ENCODE measurements at regions of chr9 and their contacts with region 1.

Region 1: DNA sequence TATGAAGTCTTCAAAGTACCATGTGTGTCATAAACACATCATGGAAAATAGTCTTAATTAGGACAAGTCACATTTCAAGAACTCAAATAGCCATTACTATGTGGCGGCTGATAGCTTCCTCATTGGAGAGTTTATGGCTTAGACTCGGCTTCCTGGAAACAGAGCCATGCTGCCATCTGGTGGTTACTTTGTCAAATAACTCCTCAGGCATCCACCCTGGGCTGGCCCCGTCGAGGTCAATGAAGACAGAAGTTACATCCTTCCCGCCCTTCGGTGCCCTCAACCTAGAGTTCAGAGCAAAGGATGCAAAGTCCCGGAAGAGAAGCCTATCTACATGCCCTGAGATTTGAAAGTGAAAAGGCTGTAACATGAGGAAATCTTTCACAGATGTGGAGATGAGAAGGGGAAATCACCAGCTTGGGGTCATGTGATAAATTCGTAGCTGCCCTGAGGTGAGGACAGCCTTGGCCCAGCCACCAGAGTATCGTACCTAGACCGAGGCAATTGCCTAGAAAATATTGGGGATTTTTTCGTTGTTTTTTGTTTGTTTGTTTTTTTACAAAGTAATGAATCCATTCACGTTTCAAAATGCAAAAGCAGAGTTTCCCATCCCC is 45.5 kb upstream of the ZNF169 start:
- DNase-seq: peak; percentile 52 to 90 (median 63)
- ATAC-seq: peak; percentile 85
- H3K4me3 ChIP-seq: no peak overlapping the region
- H3K4me3 Mint-ChIP-seq: no peak overlapping the region
- H3K27ac ChIP-seq: no peak overlapping the region
- H3K27ac Mint-ChIP-seq: no peak overlapping the region
- H3K4me1 ChIP-seq: peaks cover 5% of the 10 kb centered on the region
- H3K4me1 Mint-ChIP-seq: peaks cover 4% of the 10 kb centered on the region
- H3K27me3 ChIP-seq: peaks cover 3 to 15% of the 10 kb centered on the region in 2 experiments
- H3K27me3 Mint-ChIP-seq: peaks cover 35% of the 10 kb centered on the region
- CTCF ChIP-seq: peak; percentile 88

Region 2: GRCh38 chr9:93682232-93682968 is 531.2 kb before region 1 on chr9:
- CTCF ChIA-PET with region 1: no interaction called
- POLR2A ChIA-PET with region 1: no interaction called
- intact Hi-C with region 1: loop called (anchors 1 to 5 kb)
- DNase-seq: peak; percentile 32 to 72 (median 53)
- ATAC-seq: peak; percentile 68
- H3K4me3 ChIP-seq: no peak overlapping the region
- H3K4me3 Mint-ChIP-seq: no peak overlapping the region
- H3K27ac ChIP-seq: no peak overlapping the region
- H3K27ac Mint-ChIP-seq: no peak overlapping the region
- H3K4me1 ChIP-seq: peaks cover 6% of the 10 kb centered on the region
- H3K4me1 Mint-ChIP-seq: no peaks in the 10 kb centered on the region
- H3K27me3 ChIP-seq: peaks cover 0 to 2% of the 10 kb centered on the region in 2 experiments
- H3K27me3 Mint-ChIP-seq: peaks cover 7% of the 10 kb centered on the region
- CTCF ChIP-seq: peak; percentile 69

Region 3: DNA sequence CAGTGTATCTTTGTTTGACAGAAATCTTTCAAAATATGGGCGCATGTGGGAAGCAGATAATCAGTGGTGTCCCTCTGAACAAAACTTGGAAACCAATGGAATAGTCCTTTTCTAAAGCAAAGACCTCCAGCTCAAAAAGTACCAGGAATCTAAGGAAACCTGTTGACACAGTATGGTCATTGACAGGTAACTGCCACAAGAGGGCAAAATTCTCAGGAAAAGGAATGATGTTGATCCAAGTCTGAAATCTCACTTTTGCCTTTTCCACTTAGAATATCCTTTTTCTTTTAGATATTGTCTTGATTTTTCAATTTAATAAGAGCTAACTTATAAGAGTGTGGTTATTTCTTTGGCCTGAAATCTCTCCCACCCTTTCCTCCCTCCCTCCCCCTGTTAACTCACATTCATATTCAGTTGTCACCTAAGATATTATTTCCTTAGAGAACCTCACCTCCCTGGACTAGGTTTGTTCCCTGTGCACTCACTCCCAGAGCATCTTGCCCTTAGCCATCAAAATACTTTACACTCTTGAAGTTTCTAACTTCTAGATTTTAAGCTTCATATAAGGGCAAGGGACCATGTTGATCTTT is 199.5 kb before region 1 on chr9:
- CTCF ChIA-PET with region 1: interaction called, 4 read pairs
- POLR2A ChIA-PET with region 1: no interaction called
- intact Hi-C with region 1: loop called (anchors 2 to 5 kb)
- DNase-seq: peak in 3 of 14 experiments; percentile 18 to 33 (median 28)
- ATAC-seq: no peak
- H3K4me3 ChIP-seq: no peak overlapping the region
- H3K4me3 Mint-ChIP-seq: no peak overlapping the region
- H3K27ac ChIP-seq: no peak overlapping the region
- H3K27ac Mint-ChIP-seq: no peak overlapping the region
- H3K4me1 ChIP-seq: peaks cover 11% of the 10 kb centered on the region
- H3K4me1 Mint-ChIP-seq: peaks cover 26% of the 10 kb centered on the region
- H3K27me3 ChIP-seq: no peaks in the 10 kb centered on the region
- H3K27me3 Mint-ChIP-seq: no peaks in the 10 kb centered on the region
- CTCF ChIP-seq: peak; percentile 71

Region 4: GRCh38 chr9:94065535-94065961 is 148.1 kb before region 1 on chr9:
- CTCF ChIA-PET with region 1: interaction called, 54 read pairs
- POLR2A ChIA-PET with region 1: no interaction called
- intact Hi-C with region 1: loop called (anchors 1 kb)
- DNase-seq: peak; percentile 50 to 84 (median 68)
- ATAC-seq: peak; percentile 55
- H3K4me3 ChIP-seq: no peak overlapping the region
- H3K4me3 Mint-ChIP-seq: no peak overlapping the region
- H3K27ac ChIP-seq: no peak overlapping the region
- H3K27ac Mint-ChIP-seq: no peak overlapping the region
- H3K4me1 ChIP-seq: no peaks in the 10 kb centered on the region
- H3K4me1 Mint-ChIP-seq: no peaks in the 10 kb centered on the region
- H3K27me3 ChIP-seq: no peaks in the 10 kb centered on the region
- H3K27me3 Mint-ChIP-seq: no peaks in the 10 kb centered on the region
- CTCF ChIP-seq: peak; percentile 90